ENCODE measurements at regions of chr2 and their contacts with region 1.

Region 1: GRCh38 chr2:54455563-54456361 is at the start of gene SPTBN1:
- DNase-seq: peak; percentile 66
- ATAC-seq: peak; percentile 69
- H3K4me3 ChIP-seq: peak within 1 kb of the TSS; percentile 93
- H3K27ac ChIP-seq: peak within 1 kb of the TSS; percentile 43
- H3K4me1 ChIP-seq: peaks cover 29% of the 10 kb centered on the region
- H3K27me3 ChIP-seq: no peaks in the 10 kb centered on the region
- CTCF ChIP-seq: no peak
- total RNA-seq, gene SPTBN1: 202 and 235 TPM in 2 replicates

Region 2: DNA sequence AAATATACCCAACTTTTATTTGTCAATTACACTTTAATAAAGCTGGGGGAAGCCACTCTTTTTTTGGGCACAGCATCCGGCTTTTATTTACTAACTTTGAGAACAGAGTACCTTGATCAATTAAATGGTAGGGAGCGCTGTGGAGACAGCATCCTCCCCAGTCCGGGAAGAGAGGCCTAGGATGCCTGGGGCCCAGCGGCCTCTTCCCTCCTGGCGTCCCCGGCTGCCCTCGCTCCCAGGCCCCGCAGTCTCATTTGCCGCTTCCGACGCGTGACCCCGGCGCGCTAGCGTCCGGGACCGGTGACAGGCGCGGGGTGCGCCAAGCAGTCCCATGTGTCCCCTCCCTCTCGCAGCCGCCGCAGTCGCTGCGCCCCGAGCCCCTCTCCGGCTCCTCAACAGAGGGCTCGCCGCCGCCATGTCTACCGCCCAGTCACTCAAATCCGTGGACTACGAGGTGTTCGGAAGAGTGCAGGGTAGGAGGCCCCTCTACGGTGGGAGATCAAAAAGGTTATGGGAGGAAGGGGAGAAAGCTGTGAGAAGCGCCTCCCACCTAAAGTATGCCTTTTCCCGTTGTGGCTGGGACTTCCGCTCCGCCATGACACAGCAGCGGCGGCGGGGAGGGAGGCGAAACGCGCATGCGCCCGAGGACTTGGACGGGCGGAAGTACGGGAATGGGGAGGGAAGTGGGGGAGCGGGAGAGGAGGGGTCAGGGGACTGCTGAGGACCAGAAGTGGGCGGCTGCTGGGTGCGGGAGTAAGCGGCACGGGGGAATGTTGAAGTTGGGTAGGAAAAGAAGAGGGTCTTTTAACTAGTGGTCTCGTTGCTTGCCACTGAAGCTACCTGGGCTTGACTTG is 340.3 kb before region 1 on chr2 and contains the start of gene ACYP2:
- CTCF ChIA-PET with region 1: no interaction called
- POLR2A ChIA-PET with region 1: no interaction called
- intact Hi-C with region 1: loop called (anchors 2 kb)
- DNase-seq: peak; percentile 93
- ATAC-seq: peak; percentile 90
- H3K4me3 ChIP-seq: peak within 1 kb of the TSS; percentile 82
- H3K27ac ChIP-seq: peak within 1 kb of the TSS; percentile 92
- H3K4me1 ChIP-seq: peaks cover 8% of the 10 kb centered on the region; the same call in 1 of the 2 replicates
- H3K27me3 ChIP-seq: no peaks in the 10 kb centered on the region
- CTCF ChIP-seq: peak; percentile 42; the same call in 1 of the 2 replicates
- total RNA-seq, gene ACYP2: 2.9 and 8.3 TPM in 2 replicates

Region 3: GRCh38 chr2:54206596-54206995 is 249.2 kb before region 1 on chr2:
- CTCF ChIA-PET with region 1: no interaction called
- POLR2A ChIA-PET with region 1: no interaction called
- intact Hi-C with region 1: loop called (anchors 10 kb)
- DNase-seq: peak; percentile 68
- ATAC-seq: peak; percentile 46; the same call in 1 of the 2 replicates
- H3K4me3 ChIP-seq: no peak overlapping the region
- H3K27ac ChIP-seq: no peak overlapping the region
- H3K4me1 ChIP-seq: no peaks in the 10 kb centered on the region
- H3K27me3 ChIP-seq: no peaks in the 10 kb centered on the region
- CTCF ChIP-seq: peak; percentile 84

Region 4: DNA sequence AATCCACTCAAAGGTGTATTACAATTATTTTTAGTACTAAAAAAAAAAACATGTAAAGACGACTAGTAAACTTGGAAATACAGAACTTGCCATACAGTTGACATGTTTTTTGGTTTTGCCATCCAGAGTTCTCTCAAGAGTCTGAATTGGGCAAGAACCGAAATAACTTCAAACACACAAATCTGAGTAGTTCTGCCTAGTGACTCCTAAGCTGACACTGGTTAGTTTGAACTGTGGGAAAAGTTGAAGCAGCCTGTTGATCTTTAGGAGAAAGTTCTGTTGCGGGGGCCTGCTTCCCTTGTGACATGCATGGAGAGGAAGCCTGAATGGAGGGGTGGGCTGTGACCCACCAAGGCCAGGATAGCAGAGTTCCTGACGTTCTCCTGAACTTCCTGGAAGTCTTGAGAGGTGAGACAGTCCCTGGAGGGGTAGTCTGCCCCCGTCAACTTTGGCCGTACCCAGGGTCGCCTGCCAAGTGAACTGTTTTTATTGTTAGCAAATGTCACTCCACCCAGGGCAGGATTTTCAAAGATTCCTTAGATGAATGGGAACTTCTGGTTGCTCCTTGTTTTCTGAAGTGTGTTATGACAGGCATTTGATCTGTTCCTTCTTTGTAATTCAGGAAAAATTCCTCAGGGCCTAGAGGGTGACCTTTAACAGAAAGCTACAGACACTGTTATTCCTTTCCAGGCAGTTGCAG is 85.2 kb before region 1 on chr2:
- CTCF ChIA-PET with region 1: no interaction called
- POLR2A ChIA-PET with region 1: no interaction called
- intact Hi-C with region 1: no loop called
- DNase-seq: no peak
- ATAC-seq: no peak
- H3K4me3 ChIP-seq: no peak overlapping the region
- H3K27ac ChIP-seq: no peak overlapping the region
- H3K4me1 ChIP-seq: no peaks in the 10 kb centered on the region
- H3K27me3 ChIP-seq: no peaks in the 10 kb centered on the region; the same call in 1 of the 2 replicates
- CTCF ChIP-seq: no peak

Region 5: DNA sequence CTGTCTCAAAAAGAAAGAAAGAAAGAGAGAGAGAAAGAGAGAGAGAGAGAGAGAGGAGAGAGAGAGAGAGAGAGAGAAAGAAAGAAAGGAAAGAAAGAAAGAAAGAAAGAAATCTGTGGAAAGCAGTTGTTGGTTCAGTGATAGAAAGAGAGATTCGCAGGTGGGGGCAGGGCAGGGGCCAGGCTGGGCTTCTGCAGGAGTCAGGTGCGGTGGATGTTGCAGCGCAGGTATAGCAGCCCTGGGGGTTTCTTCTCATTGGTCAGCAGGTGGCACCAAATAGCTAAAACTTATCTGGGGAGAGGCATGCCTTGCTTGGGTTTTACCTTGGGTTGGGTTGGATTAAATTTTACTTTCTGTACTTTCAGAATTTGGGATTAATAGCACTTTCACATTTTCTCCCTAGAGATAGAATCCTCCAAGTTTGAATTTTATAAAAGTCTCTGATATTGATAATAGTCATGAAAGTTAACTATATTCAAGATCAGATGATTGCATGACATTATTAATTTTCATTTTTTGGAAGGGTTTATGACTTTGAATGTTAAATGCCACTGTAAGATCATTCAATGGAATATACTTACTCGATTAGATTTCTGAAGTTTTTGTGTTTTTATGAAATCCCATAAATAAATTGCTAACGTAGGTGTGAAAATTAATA is 67.0 kb after region 1 on chr2:
- CTCF ChIA-PET with region 1: no interaction called
- POLR2A ChIA-PET with region 1: no interaction called
- intact Hi-C with region 1: loop called (anchors 5 kb)
- DNase-seq: peak; percentile 88
- ATAC-seq: peak; percentile 79
- H3K4me3 ChIP-seq: no peak overlapping the region
- H3K27ac ChIP-seq: peak overlapping the region; percentile 28
- H3K4me1 ChIP-seq: peaks cover 35% of the 10 kb centered on the region
- H3K27me3 ChIP-seq: no peaks in the 10 kb centered on the region
- CTCF ChIP-seq: peak; percentile 79

Measured in PC-3 (cell line).